ENCODE measurements at regions of chr14 and their contacts with region 1.

Region 1: GRCh38 chr14:50311975-50312733 is at the starts of genes DMAC2L and L2HGDH:
- DNase-seq: peak; percentile 97
- ATAC-seq: peak; percentile 100
- total RNA-seq, gene DMAC2L: 22.5 TPM
- total RNA-seq, gene L2HGDH: 10.5 TPM

Region 2: GRCh38 chr14:49867831-49868723 is 444.1 kb before region 1 on chr14:
- intact Hi-C with region 1: loop called (anchors 10 kb)
- DNase-seq: peak; percentile 99
- ATAC-seq: peak; percentile 97

Region 3: DNA sequence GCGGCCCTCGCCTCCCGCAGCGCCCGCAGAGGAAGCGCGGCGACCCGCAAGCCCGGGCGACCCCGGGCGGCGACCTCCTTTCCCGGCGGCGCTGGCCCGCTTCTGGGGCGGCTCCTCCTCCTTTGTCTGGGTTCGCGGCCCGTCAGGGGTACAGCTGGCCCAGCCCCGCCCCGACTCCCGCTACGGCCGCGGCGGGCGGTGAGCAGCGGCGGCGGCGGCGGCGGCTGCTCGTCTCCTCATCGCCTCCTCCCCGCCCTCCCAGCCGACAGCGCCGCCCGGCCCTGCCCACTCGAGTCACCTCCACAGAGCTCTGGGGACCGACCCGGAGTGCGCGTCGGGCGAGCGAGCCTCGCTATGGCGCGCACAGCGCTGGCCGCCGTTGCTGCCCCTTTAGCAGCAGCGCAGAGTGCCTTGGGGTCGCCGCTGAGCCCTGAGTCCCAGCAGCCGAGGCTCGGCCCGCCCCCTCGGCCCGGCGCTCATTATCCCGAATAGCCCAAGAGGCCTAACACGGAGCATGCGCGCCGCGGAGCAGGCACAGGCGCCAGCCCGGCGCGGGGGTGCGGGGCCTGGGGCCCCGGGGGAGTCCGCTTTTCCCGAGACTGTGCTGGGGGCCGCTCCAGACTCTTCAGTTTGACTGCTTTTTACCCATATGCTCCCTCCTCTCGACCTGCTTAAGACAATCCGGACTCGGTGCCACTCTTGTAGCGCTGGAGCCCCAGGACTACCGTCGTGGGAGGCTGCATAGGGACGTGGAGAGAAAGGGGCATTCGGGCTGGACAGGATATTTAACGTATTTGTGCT is 80.5 kb before region 1 on chr14 and contains the start of gene SOS2:
- intact Hi-C with region 1: loop called (anchors 2 kb)
- DNase-seq: peak; percentile 95
- ATAC-seq: peak; percentile 96
- total RNA-seq, gene SOS2: 35.6 TPM

Region 4: GRCh38 chr14:50344116-50344775 is 32.1 kb after region 1 on chr14:
- intact Hi-C with region 1: no loop called
- DNase-seq: no peak
- ATAC-seq: no peak

Region 5: DNA sequence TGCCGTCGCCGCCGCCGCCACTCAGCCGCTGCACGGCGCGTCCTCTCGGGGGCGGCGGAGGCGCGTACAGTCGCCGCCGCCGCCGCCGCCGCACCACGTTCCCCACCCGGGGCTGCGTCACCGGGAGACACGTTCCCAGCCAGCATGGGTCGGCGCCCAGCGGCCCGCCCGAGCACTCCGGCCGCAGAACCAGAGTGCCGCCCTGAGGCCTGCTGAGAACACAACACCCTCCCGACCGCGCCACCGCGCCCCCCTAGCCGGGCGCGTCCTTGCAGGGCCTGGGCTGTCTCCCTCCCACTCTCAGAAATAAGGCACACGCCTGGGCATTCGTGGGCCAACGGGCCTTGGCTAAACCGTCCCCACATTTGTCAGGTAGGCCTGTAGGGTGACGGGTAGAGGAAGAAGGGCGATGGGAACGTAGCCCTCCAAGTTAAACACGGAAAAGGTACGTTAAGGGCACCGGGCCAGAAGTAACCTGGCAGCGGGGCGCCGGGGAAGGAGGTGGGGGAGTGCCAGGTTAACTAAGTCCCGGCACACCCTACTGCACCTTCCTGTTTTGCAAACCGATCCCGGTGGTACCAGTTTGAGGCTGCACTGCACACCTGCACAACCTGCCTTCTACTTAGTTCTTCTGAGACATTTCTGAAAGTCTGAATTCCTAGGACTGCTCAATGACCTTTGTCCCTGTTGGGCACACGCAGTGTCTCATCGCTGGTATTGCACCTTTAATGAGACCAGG is 220.5 kb after region 1 on chr14 and contains the start of gene MAP4K5:
- intact Hi-C with region 1: loop called (anchors 2 kb)
- DNase-seq: peak; percentile 96
- ATAC-seq: peak; percentile 100
- total RNA-seq, gene MAP4K5: 14.3 TPM

Region 6: DNA sequence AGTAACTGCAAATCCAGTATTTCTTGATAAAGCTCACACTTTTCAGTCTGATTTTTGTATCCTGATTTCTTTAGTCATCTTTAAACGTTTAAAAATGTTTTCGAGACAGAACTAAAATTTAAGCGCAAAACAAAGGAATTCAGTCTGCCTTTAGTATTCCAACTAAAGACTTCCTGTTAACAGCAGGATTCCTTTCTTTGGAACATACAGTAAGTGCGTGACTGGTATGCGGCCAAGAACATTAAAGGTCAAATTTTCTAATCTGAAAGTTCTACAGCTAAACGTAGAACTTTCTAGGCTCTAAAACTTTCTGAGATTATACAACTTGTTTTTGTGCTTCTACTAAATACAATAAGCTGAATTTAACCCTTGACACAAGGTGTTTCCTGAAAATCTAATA is 346.0 kb after region 1 on chr14:
- intact Hi-C with region 1: loop called (anchors 10 kb)
- DNase-seq: no peak
- ATAC-seq: peak; percentile 50

Region 7: DNA sequence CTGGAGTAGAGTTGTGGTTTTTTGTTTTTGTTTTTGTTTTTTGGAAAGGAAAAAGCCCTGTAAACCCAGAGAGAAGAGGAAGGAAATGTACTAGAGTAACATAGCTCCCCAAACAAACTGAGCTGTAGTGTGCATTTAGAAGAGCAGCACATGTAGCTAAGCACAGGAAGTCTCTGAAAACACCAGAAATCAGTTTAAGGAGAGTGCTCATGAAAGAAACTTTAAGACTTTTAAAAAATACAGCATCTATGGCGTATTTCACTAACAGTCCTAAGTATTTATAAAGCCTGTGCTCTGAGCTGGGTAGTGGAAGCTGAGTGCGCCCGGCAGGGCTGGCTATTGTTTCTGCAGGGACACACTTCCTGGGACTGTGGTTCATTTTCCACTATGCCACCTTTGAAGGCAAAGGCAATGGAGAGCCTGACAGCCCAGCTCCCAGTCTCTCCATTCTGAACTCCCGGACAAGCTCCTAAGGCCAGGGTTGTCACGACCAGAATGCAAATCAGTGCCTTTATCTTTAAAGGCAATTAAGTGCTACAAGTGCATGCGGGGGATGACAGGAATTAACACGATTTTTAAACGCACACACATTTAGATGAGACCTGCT is 473.4 kb after region 1 on chr14:
- intact Hi-C with region 1: loop called (anchors 10 kb)
- DNase-seq: no peak
- ATAC-seq: peak; percentile 30